ENCODE measurements at regions of chr1 and their contacts with region 1.

Region 1: GRCh38 chr1:113958701-113959100 is 20.6 kb upstream of the OLFML3 start:
- DNase-seq: no peak
- H3K4me3 ChIP-seq: no peak overlapping the region
- H3K27ac ChIP-seq: no peak overlapping the region
- H3K4me1 ChIP-seq: peaks cover 18% of the 10 kb centered on the region
- H3K27me3 ChIP-seq: no peaks in the 10 kb centered on the region
- CTCF ChIP-seq: no peak

Region 2: GRCh38 chr1:113940365-113941244 is 18.1 kb before region 1 on chr1:
- CTCF ChIA-PET with region 1: interaction called, 9 read pairs
- POLR2A ChIA-PET with region 1: interaction called, 24 read pairs
- intact Hi-C with region 1: no loop called
- DNase-seq: no peak
- H3K4me3 ChIP-seq: no peak overlapping the region
- H3K27ac ChIP-seq: no peak overlapping the region
- H3K4me1 ChIP-seq: peaks cover 34% of the 10 kb centered on the region
- H3K27me3 ChIP-seq: no peaks in the 10 kb centered on the region
- CTCF ChIP-seq: no peak

Measured in A673 (cell line).